ENCODE measurements at regions of chr11 and their contacts with region 1.

Region 1: DNA sequence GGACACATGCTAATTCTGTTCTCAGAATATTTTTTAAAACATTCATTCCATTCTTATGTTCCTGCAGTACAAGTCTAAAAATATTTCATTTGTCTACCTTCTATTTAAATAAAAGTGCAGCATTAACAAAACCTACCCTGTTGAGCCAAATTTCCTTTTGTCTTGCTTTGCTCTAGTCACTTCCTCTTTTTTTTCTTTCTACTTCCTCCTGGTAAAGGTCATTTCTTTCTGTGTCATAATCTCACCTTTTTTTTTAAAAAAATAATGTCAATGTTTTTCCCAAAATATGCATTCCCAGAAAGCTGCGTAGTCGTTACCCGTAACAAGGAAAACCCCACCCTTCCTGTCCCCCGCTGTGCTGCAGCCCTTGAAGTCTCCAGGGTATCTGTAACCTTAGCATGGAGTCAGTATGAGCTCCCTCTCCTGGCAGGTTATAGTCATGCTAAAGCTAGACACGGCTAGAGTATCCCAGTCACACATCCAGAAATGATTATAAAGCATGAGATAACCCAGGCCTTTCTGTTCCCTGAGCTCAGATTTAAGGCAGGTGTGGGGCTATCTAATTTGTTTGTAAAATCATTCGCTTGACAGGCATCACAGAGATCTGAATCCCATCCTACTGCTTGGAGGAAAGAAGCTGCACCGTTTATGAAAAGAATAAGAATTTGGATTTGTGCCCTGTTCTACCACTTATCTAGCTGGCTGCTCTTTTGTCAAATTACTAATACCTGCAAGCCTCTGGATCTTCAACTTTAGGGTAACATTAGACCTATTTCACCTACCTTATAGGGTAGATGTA is 51.1 kb upstream of the EED start:
- DNase-seq: peak; percentile 66
- ATAC-seq: peak; percentile 99

Region 2: DNA sequence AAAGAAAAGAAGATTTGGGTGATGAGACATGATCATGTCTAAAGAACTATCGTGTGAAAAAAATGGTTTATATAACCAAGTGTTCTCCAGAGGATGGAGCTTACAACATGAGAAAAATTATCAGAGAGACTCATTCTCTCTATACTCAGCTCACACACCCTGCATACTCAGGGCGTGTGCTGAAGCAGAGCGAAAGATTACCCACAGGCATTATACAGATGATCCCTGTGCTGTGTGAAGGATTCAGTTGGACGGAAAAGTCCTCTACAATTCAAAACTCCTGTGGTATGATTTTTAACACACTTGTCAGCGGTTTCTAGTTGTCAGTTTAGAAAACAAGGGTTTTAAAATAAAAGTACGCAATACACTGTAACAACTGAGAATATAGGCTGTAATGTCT is 833.6 kb before region 1 on chr11:
- intact Hi-C with region 1: no loop called
- DNase-seq: no peak
- ATAC-seq: no peak

Region 3: DNA sequence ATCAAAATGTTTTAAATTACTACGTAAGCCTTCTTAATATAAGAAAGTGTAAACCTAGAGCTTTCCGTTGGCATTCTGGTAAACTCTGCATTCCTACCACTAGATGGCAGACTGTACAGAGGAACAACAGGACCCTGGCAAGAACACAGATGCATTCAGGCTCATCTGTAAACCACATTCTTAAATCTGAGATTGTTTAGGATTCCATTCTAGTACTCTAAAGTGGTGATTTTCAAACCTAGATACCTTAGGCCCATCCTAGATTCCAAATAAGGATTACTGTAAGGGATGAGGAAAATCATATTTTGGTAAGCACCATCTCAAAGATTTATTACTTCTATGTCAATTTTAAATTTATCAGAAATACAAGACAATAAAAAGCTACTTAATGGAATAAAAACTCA is 151.5 kb before region 1 on chr11:
- intact Hi-C with region 1: loop called (anchors 1 kb)
- DNase-seq: no peak
- ATAC-seq: peak; percentile 78

Region 4: DNA sequence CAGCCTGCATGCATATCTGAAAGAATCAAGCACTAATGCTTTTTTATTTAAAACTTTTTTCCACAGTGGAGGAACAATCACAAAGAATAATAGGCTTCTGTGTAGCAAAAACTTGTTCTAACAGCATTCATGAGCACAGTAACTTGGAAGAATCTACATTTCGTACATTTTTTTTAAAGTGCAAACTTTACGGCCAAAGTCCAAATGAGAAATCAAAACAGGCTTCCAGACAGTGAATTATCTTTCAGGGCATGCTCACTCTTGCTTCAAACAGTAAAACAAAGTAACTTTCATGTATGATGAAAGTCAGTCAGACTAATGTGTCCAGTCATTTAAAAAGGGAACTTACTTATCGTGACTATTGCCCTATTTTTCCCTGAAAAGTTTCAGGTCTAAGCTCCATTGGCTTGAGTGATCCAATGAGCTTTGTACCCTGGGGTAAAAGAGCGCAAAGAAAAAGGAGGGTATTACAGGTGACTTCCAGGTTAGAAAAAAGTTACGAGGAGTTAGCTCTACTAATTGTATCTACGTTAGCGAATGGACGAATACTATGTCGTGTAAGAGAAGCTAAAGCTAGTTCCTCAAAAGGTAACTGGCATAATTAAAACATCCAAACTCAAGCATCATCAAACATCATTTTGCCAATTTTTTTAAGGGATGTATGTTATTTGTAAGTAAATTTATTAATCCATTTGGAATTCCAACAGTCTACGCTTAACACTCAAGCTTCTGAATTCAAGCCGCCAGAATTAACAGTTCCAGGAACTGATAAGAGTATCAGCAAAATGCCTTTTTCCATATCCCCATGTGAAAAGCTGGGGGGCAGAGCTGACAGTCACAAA is 126.3 kb before region 1 on chr11:
- intact Hi-C with region 1: loop called (anchors 2 kb)
- DNase-seq: no peak
- ATAC-seq: no peak

Region 5: GRCh38 chr11:86291466-86292262 is 98.2 kb after region 1 on chr11:
- intact Hi-C with region 1: no loop called
- DNase-seq: no peak
- ATAC-seq: peak; percentile 40

Region 6: DNA sequence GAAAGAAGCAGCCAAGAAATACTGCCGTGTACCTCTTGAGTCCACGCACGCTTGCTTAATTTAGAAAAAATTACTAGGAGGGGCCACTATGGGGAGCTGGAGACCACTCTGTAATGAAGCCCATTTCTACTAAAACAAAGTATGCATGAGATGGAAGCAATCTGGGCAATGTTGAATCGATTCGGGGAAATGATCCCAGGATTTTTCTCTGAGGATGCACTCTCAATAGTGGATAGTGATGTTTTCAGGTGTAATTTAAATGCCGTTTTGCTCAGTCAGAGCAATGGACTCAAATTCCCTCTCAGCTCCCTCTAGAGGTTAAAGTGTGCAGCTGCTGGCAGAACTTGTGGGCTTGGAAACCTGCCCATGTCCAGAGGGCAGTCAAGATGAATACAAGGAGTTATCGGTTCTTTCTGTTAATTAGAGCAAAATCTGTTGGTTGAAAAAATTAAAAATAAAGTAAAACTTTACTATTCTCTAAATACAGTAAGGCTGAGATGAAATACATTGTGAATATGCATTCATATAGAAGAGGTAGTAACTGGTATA is 414.8 kb after region 1 on chr11:
- intact Hi-C with region 1: no loop called
- DNase-seq: peak; percentile 70
- ATAC-seq: peak; percentile 87

Measured in left ventricle myocardium superior (tissue), 1 donor.